Activated CD4-positive, alpha-beta memory T cell treated with anti-CD3 and anti-CD28 coated beads, Interleukin-2, amount 10 ng/mL, durations not matched to agents 7 days and 5 days (primary cell): ENCODE measurements at regions of chr19 and their contacts with region 1.

Region 1: GRCh38 chr19:3429581-3430080 is 50.7 kb downstream of the SMIM24 start:
- DNase-seq: peak; percentile 77
- H3K4me3 Mint-ChIP-seq: no peak overlapping the region
- H3K27ac Mint-ChIP-seq: no peak overlapping the region
- H3K4me1 Mint-ChIP-seq: peaks cover 6% of the 10 kb centered on the region
- H3K27me3 Mint-ChIP-seq: no peaks in the 10 kb centered on the region

Region 2: DNA sequence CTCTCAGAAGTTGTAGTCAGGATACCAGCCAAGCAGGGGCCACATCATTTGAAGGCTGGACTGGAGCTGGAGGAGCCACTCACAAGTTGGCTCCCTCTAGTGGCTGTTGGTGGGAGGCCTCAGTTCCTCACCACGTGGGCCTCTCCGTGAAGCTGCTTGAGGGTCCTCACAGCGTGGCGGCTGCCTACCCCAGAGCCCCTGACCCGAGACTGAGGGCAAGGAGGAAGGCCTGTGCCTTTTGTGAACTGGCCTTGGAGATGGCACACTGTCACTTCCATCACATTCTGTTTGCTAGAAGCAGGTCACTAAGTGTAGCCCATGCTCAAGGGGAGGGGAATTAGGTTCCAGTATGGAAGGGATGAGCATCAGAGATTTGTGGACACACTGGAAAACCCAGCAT is 320.9 kb before region 1 on chr19:
- CTCF ChIA-PET with region 1: no interaction called
- POLR2A ChIA-PET with region 1: no interaction called
- DNase-seq: peak; percentile 76
- H3K4me3 Mint-ChIP-seq: no peak overlapping the region
- H3K27ac Mint-ChIP-seq: no peak overlapping the region
- H3K4me1 Mint-ChIP-seq: peaks cover 8% of the 10 kb centered on the region
- H3K27me3 Mint-ChIP-seq: peaks cover 3% of the 10 kb centered on the region

Region 3: GRCh38 chr19:3304871-3305423 is 124.7 kb before region 1 on chr19:
- CTCF ChIA-PET with region 1: interaction called, 13 read pairs
- POLR2A ChIA-PET with region 1: interaction called, 4 read pairs
- DNase-seq: peak; percentile 79
- H3K4me3 Mint-ChIP-seq: no peak overlapping the region
- H3K27ac Mint-ChIP-seq: no peak overlapping the region
- H3K4me1 Mint-ChIP-seq: no peaks in the 10 kb centered on the region
- H3K27me3 Mint-ChIP-seq: no peaks in the 10 kb centered on the region

Region 4: DNA sequence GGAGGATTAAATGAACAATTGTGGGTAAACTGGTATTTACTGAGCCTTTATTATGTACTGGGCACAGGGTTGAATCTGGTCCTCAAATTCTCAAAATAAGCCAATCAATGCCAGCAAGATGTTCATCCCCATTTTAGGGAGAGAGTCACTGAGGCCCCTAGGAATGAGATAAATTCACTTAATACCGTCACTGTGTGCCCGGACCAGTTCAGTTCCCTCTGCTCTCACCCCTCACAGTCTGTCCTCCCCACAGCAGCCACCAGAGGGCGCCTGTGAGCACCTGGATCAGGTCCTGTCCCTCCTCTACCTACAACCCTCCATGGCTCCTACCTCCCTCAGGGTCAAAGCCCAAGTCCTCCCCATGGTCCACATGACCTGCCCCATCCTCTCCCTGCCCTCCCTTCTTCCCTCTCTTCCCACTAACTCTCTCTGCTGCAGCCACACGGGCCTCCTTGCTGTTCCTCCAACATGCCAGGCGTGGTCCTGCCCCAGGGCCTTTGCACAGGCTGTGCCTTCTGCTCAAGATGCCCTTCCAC is 105.2 kb before region 1 on chr19:
- CTCF ChIA-PET with region 1: interaction called, 44 read pairs
- POLR2A ChIA-PET with region 1: no interaction called
- DNase-seq: peak; percentile 83
- H3K4me3 Mint-ChIP-seq: no peak overlapping the region
- H3K27ac Mint-ChIP-seq: no peak overlapping the region
- H3K4me1 Mint-ChIP-seq: peaks cover 2% of the 10 kb centered on the region
- H3K27me3 Mint-ChIP-seq: peaks cover 8% of the 10 kb centered on the region

Region 5: GRCh38 chr19:3440082-3440481 is 10.5 kb after region 1 on chr19:
- CTCF ChIA-PET with region 1: interaction called, 16 read pairs
- POLR2A ChIA-PET with region 1: interaction called, 3 read pairs
- DNase-seq: peak; percentile 65
- H3K4me3 Mint-ChIP-seq: no peak overlapping the region
- H3K27ac Mint-ChIP-seq: no peak overlapping the region
- H3K4me1 Mint-ChIP-seq: peaks cover 9% of the 10 kb centered on the region
- H3K27me3 Mint-ChIP-seq: no peaks in the 10 kb centered on the region